ENCODE measurements at regions of chr9 and their contacts with region 1.

Region 1: DNA sequence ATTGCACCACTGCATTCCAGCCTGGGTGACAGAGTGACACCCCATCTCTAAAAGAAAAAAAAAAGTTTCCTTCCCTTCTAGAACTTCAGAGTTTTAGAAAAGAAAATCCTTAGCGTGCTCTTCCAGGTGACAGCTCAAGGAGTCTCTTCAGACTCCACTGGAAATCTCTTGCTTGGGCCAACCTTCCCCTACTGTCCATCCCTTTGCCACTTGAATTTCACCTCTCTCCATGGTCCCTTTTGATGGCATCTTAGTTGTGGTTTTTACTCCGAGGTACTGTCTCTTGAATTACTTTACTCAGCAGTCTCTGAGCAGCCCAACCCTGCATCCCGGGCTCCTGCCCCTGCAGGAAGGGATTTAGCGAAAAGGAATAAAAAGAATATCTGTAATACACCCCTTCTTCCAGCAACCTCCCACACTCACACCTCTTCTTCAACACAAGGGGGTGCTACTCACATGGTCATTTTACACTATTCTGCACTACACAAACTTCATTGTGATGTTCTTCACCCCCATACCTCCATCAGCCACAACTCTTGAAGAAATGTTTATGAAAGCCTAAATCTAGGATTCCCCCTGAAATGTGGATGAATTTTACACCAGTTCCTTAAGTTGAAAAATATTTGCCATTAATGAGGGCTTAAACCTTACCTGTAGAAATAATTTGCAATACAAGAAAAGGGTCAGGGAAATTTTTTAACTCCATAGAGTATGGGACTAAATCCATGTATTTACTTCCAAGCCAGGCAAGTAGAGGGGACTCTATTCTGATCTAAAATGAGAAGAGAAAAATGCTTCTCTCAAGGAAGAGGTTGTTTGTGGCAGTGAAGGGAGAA is 25.9 kb downstream of the TPD52L3 start:
- DNase-seq: no peak
- H3K4me3 ChIP-seq: no peak overlapping the region
- H3K27ac ChIP-seq: no peak overlapping the region
- H3K4me1 ChIP-seq: no peaks in the 10 kb centered on the region
- H3K27me3 ChIP-seq: no peaks in the 10 kb centered on the region
- CTCF ChIP-seq: peak; percentile 39 to 79 (median 76)
- POLR2A ChIP-seq: no peak

Region 2: GRCh38 chr9:6226696-6227095 is 127.4 kb before region 1 on chr9:
- intact Hi-C with region 1: no loop called
- DNase-seq: peak; percentile 5
- H3K4me3 ChIP-seq: no peak overlapping the region
- H3K27ac ChIP-seq: no peak overlapping the region
- H3K4me1 ChIP-seq: no peaks in the 10 kb centered on the region
- H3K27me3 ChIP-seq: no peaks in the 10 kb centered on the region
- CTCF ChIP-seq: no peak
- POLR2A ChIP-seq: no peak

Region 3: GRCh38 chr9:6566409-6567139 is 212.5 kb after region 1 on chr9:
- intact Hi-C with region 1: loop called (anchors 5 kb)
- DNase-seq: no peak
- H3K4me3 ChIP-seq: no peak overlapping the region
- H3K27ac ChIP-seq: no peak overlapping the region
- H3K4me1 ChIP-seq: no peaks in the 10 kb centered on the region
- H3K27me3 ChIP-seq: no peaks in the 10 kb centered on the region
- CTCF ChIP-seq: no peak
- POLR2A ChIP-seq: no peak

Region 4: GRCh38 chr9:6645355-6646292 is 291.6 kb after region 1 on chr9 and contains the start of gene GLDC:
- intact Hi-C with region 1: loop called (anchors 10 kb)
- DNase-seq: peak; percentile 7
- H3K4me3 ChIP-seq: peak within 1 kb of the TSS; percentile 27 to 32
- H3K27ac ChIP-seq: no peak within 1 kb of the TSS
- H3K4me1 ChIP-seq: peaks cover 3% of the 10 kb centered on the region
- H3K27me3 ChIP-seq: no peaks in the 10 kb centered on the region
- CTCF ChIP-seq: no peak
- POLR2A ChIP-seq: no peak
- total RNA-seq, gene GLDC: 2.7 to 4.0 TPM

Measured in prostate gland (tissue), 2 donors.